PC-3 (cell line): ENCODE measurements at regions of chr7 and their contacts with region 1.

Region 1: DNA sequence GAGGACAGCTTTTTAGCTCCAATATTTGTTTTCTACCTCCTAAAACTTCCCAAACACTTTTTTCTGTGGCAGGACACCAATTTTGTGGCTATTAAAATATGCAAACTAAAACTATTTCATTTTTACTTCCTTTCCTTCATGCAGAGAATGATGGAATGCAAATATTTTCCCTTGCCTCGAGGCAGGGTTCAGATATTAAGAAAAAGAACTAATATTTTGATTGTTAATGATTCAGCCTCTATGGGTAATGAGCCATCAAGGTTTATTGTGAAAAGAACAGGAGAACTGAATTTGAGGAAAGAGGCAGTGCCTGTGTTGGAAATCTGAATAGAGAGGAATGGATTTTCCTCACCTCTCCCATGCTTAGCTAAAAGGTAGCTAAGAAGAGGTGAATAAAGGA is 43.1 kb upstream of the CASD1 start:
- DNase-seq: peak; percentile 57
- ATAC-seq: peak; percentile 88
- H3K4me3 ChIP-seq: no peak overlapping the region
- H3K27ac ChIP-seq: no peak overlapping the region
- H3K4me1 ChIP-seq: peaks cover 13% of the 10 kb centered on the region
- H3K27me3 ChIP-seq: no peaks in the 10 kb centered on the region
- CTCF ChIP-seq: no peak

Region 2: GRCh38 chr7:94509879-94510581 is 43.5 kb after region 1 on chr7:
- CTCF ChIA-PET with region 1: no interaction called
- POLR2A ChIA-PET with region 1: no interaction called
- intact Hi-C with region 1: loop called (anchors 2 kb)
- DNase-seq: peak; percentile 54
- ATAC-seq: peak; percentile 72
- H3K4me3 ChIP-seq: peak overlapping the region; percentile 88
- H3K27ac ChIP-seq: peak overlapping the region; percentile 80
- H3K4me1 ChIP-seq: peaks cover 32% of the 10 kb centered on the region
- H3K27me3 ChIP-seq: no peaks in the 10 kb centered on the region
- CTCF ChIP-seq: no peak

Region 3: GRCh38 chr7:94529516-94529915 is 63.0 kb after region 1 on chr7:
- CTCF ChIA-PET with region 1: no interaction called
- POLR2A ChIA-PET with region 1: no interaction called
- intact Hi-C with region 1: no loop called
- DNase-seq: no peak
- ATAC-seq: no peak
- H3K4me3 ChIP-seq: no peak overlapping the region
- H3K27ac ChIP-seq: no peak overlapping the region
- H3K4me1 ChIP-seq: no peaks in the 10 kb centered on the region
- H3K27me3 ChIP-seq: no peaks in the 10 kb centered on the region
- CTCF ChIP-seq: no peak

Region 4: GRCh38 chr7:94697035-94697974 is 230.8 kb after region 1 on chr7:
- CTCF ChIA-PET with region 1: no interaction called
- POLR2A ChIA-PET with region 1: no interaction called
- intact Hi-C with region 1: loop called (anchors 5 kb)
- DNase-seq: peak; percentile 96
- ATAC-seq: peak; percentile 66
- H3K4me3 ChIP-seq: peak overlapping the region; percentile 51
- H3K27ac ChIP-seq: peak overlapping the region; percentile 85
- H3K4me1 ChIP-seq: peaks cover 40% of the 10 kb centered on the region
- H3K27me3 ChIP-seq: no peaks in the 10 kb centered on the region
- CTCF ChIP-seq: no peak